ENCODE measurements at regions of chr2 and their contacts with region 1.

Region 1: GRCh38 chr2:177148477-177149154 is 64.0 kb upstream of the HNRNPA3 start:
- DNase-seq: peak; percentile 76
- H3K4me3 ChIP-seq: peak overlapping the region; percentile 55
- H3K27ac ChIP-seq: no peak overlapping the region
- H3K27me3 ChIP-seq: peaks cover 11% of the 10 kb centered on the region
- CTCF ChIP-seq: peak; percentile 94

Region 2: GRCh38 chr2:176653479-176654443 is 494.9 kb before region 1 on chr2:
- in situ Hi-C with region 1: loop called (anchors 25 kb)
- DNase-seq: peak; percentile 72
- H3K4me3 ChIP-seq: no peak overlapping the region
- H3K27ac ChIP-seq: no peak overlapping the region
- H3K27me3 ChIP-seq: peaks cover 2% of the 10 kb centered on the region
- CTCF ChIP-seq: peak; percentile 87

Region 3: DNA sequence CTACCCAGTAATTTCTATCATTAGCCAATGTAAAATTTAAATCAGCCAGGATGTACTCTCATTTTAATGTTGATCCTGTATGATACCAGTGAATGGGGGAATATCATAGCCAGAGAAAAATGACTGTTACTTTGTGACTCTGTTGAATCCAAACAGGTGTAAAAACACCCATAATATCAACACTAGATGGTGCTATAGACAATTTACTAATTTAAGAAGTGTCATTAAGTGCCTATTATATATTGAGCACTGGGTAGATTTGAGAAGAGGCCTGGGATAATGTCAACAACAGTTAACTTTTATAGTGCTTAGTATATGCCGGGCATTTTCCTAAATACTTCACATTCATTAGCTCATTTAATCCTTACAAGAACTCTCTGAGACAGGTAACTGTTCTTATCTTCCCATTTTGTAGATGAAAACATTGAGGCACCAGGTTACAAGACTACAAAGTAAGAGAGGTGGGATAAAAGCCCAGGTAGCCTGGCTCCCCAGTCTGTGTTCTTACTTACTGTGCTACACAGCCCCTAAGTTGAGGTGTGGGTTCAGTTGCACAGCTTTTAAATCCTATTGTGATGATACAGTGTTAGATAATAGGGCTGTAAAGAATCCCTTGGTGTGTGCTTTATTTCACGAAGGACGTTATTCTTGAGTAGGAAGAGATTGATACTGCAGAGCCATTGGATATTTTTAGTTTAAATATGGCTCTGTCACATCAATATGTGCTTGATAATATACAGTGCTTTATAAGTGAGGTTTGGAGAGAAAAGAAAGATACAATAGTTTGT is 569.4 kb after region 1 on chr2:
- in situ Hi-C with region 1: no loop called
- DNase-seq: no peak
- H3K4me3 ChIP-seq: no peak overlapping the region
- H3K27ac ChIP-seq: no peak overlapping the region
- H3K27me3 ChIP-seq: peaks cover 4% of the 10 kb centered on the region
- CTCF ChIP-seq: no peak

Measured in brain microvascular endothelial cell (primary cell).